ENCODE measurements at regions of chr2 and their contacts with region 1.

Region 1: GRCh38 chr2:964562-964961 is 13.9 kb downstream of the SNTG2 start:
- DNase-seq: no peak
- H3K4me3 ChIP-seq: no peak overlapping the region
- H3K27ac ChIP-seq: no peak overlapping the region
- H3K4me1 ChIP-seq: no peaks in the 10 kb centered on the region
- H3K27me3 ChIP-seq: peaks cover 51% of the 10 kb centered on the region
- CTCF ChIP-seq: no peak

Region 2: DNA sequence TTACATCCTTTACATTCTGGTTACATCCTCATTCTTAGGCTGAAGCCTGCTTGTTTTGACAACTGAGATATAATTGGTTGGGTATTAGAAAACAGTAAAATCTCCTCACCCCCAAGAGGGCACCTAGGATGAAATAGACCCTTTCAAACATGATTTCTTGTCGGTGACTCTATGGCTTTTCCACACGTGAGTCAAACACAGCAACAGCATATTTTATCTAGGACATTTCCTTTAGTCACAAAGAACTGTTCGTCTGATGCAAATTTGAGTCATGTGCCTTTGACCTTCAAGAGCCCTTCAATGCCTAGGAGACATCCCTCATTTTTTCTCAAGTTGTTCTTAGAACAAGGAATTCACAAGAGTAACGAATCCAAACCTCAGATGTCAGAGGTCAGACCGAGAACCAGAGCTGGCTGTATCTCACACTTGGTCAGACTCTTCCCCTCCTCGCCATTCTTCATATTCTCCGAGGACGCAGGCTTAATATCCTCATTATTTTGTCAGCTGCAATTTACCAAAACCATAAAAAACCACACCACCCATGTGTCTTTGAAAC is 616.1 kb before region 1 on chr2:
- CTCF ChIA-PET with region 1: interaction called, 13 read pairs
- POLR2A ChIA-PET with region 1: no interaction called
- intact Hi-C with region 1: no loop called
- DNase-seq: no peak
- H3K4me3 ChIP-seq: no peak overlapping the region
- H3K27ac ChIP-seq: no peak overlapping the region
- H3K4me1 ChIP-seq: no peaks in the 10 kb centered on the region
- H3K27me3 ChIP-seq: peaks cover 30% of the 10 kb centered on the region; the same call in 1 of the 2 replicates
- CTCF ChIP-seq: no peak

Region 3: DNA sequence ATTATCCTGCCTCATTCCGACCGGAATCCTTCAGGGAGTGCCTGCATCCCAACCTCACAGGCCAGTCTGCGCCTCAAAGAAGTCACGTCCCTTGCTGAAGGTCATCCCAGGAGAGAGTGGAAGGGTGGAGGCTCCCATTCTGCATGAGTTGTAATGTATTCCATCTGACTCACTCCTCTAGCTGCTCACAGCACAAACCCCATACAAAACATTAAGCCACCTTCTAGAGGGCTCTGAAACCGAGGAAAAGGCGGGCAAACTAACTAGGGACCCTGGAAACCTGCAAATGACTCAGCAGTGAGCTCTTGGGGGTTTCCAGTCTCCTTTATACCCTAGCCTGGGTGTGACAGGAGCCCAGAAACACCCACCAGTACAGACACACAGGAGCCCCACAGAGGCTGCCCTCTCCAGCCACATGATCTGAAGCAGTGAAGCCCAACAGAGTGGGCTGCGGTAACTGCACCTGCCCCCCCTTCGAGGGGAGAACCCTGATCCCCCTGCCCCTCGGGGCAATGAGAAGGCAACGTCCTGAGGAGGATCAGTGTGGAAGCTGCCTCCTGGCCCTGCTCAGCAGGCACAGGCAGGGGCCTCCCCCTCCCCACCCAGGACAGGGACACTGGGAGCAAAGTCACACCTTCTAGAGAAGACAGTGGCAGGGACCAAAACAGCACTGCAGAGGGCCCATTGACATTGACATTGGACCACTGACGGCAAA is 83.2 kb before region 1 on chr2:
- CTCF ChIA-PET with region 1: no interaction called
- POLR2A ChIA-PET with region 1: no interaction called
- intact Hi-C with region 1: no loop called
- DNase-seq: no peak
- H3K4me3 ChIP-seq: no peak overlapping the region
- H3K27ac ChIP-seq: no peak overlapping the region
- H3K4me1 ChIP-seq: no peaks in the 10 kb centered on the region
- H3K27me3 ChIP-seq: peaks cover 94% of the 10 kb centered on the region
- CTCF ChIP-seq: no peak

Region 4: GRCh38 chr2:979069-979928 is 14.7 kb after region 1 on chr2:
- CTCF ChIA-PET with region 1: no interaction called
- POLR2A ChIA-PET with region 1: no interaction called
- intact Hi-C with region 1: no loop called
- DNase-seq: no peak
- H3K4me3 ChIP-seq: no peak overlapping the region
- H3K27ac ChIP-seq: no peak overlapping the region
- H3K4me1 ChIP-seq: no peaks in the 10 kb centered on the region
- H3K27me3 ChIP-seq: peaks cover 49% of the 10 kb centered on the region
- CTCF ChIP-seq: no peak

Region 5: GRCh38 chr2:1051064-1051983 is 86.8 kb after region 1 on chr2:
- CTCF ChIA-PET with region 1: no interaction called
- POLR2A ChIA-PET with region 1: no interaction called
- intact Hi-C with region 1: no loop called
- DNase-seq: no peak
- H3K4me3 ChIP-seq: no peak overlapping the region
- H3K27ac ChIP-seq: no peak overlapping the region
- H3K4me1 ChIP-seq: no peaks in the 10 kb centered on the region
- H3K27me3 ChIP-seq: peaks cover 17% of the 10 kb centered on the region; the same call in 1 of the 2 replicates
- CTCF ChIP-seq: no peak

Measured in PC-9 (cell line).